Thyroid gland (tissue), 4 donors: ENCODE measurements at regions of chr14 and their contacts with region 1.

Region 1: DNA sequence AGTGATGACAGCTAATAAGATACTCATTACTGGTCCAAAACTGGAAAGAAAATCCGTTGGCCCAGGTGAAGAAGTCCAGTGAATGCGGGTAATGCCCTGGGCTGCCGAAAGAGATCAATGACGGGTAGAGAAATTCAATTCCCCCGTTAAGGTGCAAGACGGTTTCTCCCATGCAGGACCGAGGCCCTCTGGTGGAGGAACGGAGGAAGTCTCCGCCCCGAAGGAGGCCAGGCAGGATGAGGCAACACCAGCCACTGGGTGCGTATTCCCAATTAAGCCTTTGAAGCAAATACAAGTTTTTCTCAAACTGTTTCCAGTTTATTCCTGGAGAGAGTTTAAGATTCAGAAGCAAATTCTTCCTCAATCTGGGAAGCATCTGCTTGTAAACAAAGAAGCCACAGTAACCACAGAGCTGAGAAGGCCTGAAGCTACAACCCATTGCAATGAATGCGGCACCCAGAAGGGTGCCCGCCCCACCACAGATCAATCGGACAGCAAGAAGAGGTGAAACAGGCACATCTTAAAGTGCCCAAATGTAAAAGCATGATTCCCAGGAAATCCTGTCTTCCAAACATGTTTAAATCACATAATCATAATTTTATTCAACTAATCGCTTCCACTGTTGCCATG is 118.5 kb downstream of the TTC7B start:
- DNase-seq: peak; percentile 81 to 88
- H3K4me3 ChIP-seq: no peak overlapping the region
- H3K27ac ChIP-seq: peak overlapping the region in 1 of 3 donors; percentile 20
- H3K4me1 ChIP-seq: peaks cover 11 to 15% of the 10 kb centered on the region in 2 donors
- H3K27me3 ChIP-seq: no peaks in the 10 kb centered on the region
- CTCF ChIP-seq: peak; percentile 80 to 96 (median 92)
- POLR2A ChIP-seq: no peak

Region 2: GRCh38 chr14:90301668-90302090 is 396.0 kb before region 1 on chr14:
- intact Hi-C with region 1: loop called (anchors 10 kb)
- DNase-seq: no peak
- H3K4me3 ChIP-seq: no peak overlapping the region
- H3K27ac ChIP-seq: peak overlapping the region in 2 of 3 donors; percentile 62 to 74
- H3K4me1 ChIP-seq: peaks cover 0 to 7% of the 10 kb centered on the region in 2 donors
- H3K27me3 ChIP-seq: no peaks in the 10 kb centered on the region
- CTCF ChIP-seq: peak in 4 of 6 experiments; percentile 25 to 81 (median 64)
- POLR2A ChIP-seq: no peak

Region 3: GRCh38 chr14:90518941-90519256 is 178.8 kb before region 1 on chr14:
- intact Hi-C with region 1: loop called (anchors 10 kb)
- DNase-seq: peak; percentile 31 to 48
- H3K4me3 ChIP-seq: no peak overlapping the region
- H3K27ac ChIP-seq: no peak overlapping the region
- H3K4me1 ChIP-seq: peaks cover 37 to 60% of the 10 kb centered on the region in 2 donors
- H3K27me3 ChIP-seq: no peaks in the 10 kb centered on the region
- CTCF ChIP-seq: peak in 4 of 6 experiments; percentile 29 to 52 (median 42)
- POLR2A ChIP-seq: no peak